Activated CD4-positive, alpha-beta T cell treated with anti-CD3 and anti-CD28 coated beads for 36 hours (primary cell): ENCODE measurements at regions of chr3 and their contacts with region 1.

Region 1: DNA sequence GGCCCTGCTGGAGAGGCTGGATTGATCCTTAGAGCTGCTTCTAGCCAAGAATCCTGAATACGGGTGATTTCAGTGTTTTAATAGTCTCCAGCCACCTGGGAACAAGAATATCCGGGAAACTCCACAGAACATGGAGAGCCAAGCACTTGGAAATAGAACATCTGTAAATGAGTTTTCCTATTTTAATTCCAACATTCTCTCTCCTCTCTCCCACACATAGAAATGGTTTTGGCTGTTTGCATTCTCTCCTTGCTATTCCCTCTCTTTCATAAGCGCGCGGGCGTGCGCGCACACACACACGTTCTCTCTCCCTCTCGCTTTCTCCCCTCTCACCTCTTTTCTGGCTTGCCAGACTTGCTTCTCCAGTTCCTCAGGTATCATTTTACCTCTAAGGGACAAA is 50.6 kb downstream of the GADL1 start:
- DNase-seq: no peak
- ATAC-seq: no peak
- H3K4me3 Mint-ChIP-seq: no peak overlapping the region
- H3K27ac Mint-ChIP-seq: no peak overlapping the region
- H3K4me1 Mint-ChIP-seq: peaks cover 10% of the 10 kb centered on the region
- H3K27me3 Mint-ChIP-seq: peaks cover 2% of the 10 kb centered on the region

Region 2: GRCh38 chr3:30511524-30512278 is 332.2 kb before region 1 on chr3:
- CTCF ChIA-PET with region 1: no interaction called
- POLR2A ChIA-PET with region 1: no interaction called
- intact Hi-C with region 1: no loop called
- DNase-seq: peak; percentile 33
- ATAC-seq: peak; percentile 49
- H3K4me3 Mint-ChIP-seq: no peak overlapping the region
- H3K27ac Mint-ChIP-seq: no peak overlapping the region
- H3K4me1 Mint-ChIP-seq: peaks cover 11% of the 10 kb centered on the region
- H3K27me3 Mint-ChIP-seq: no peaks in the 10 kb centered on the region

Region 3: DNA sequence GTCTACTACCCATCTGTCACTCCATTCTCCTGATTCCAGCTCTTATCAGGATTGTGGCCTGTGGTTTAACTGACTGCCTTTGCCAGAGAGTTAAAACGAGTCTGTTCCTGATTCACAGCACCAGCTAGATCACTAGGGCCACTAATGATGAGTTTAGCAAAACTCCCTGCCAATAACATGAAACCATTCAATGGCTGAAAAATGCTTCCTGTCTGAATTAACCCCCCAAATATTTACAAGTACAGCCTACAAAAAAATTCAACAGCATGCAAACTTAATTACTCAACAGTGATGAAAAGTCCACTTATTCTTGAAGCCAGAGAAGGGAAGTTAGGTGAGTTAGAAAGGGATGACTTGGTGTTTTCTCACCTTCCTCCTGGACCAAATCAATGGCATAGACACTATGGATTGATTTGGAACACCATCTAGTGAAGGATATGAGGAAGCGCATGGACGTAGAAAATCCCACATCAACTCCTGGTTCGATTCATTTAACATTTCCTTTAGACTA is 96.1 kb before region 1 on chr3:
- CTCF ChIA-PET with region 1: no interaction called
- POLR2A ChIA-PET with region 1: no interaction called
- intact Hi-C with region 1: no loop called
- DNase-seq: no peak
- ATAC-seq: no peak
- H3K4me3 Mint-ChIP-seq: no peak overlapping the region
- H3K27ac Mint-ChIP-seq: no peak overlapping the region
- H3K4me1 Mint-ChIP-seq: peaks cover 60% of the 10 kb centered on the region
- H3K27me3 Mint-ChIP-seq: no peaks in the 10 kb centered on the region

Region 4: DNA sequence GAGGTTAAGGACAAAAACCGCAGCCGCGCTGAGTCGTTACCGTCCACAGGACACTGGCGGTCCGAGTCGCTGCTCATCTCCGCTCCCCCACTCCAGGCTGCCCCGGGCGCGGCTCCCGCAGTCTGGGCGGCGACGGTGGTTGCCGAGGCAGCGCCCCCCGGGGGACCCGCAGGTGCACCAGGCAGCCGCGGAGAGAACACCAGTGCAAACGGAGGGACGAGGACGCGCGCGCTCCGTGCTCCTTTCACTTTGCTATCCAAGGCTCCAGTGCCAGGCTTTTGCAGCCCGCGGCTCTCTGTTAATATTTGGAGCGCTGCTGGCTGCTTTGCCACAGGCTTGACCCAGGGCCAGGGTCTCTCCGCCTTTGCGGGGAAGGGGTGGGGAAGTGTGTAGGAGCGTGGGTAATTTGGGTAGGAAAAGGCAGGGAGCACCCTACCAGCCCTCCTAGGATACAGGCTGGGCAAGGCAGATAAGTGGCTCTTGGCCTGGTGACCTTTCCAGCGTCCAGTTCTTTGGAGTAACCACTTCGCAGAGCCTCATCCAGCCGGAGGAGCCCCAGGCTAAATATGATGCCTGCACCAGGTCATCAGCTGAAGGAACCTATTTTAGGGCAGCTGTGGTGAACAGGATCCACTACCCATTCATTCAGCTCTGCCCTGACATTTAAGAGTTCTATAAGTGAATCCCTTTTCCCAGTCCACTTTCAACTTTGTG is 50.8 kb after region 1 on chr3 and contains the start of gene GADL1:
- CTCF ChIA-PET with region 1: no interaction called
- POLR2A ChIA-PET with region 1: no interaction called
- intact Hi-C with region 1: loop called in 1 of 2 experiments (anchors 5 kb)
- DNase-seq: peak; percentile 48
- ATAC-seq: peak; percentile 53
- H3K4me3 Mint-ChIP-seq: peak within 1 kb of the TSS; percentile 57
- H3K27ac Mint-ChIP-seq: peak within 1 kb of the TSS; percentile 13
- H3K4me1 Mint-ChIP-seq: peaks cover 17% of the 10 kb centered on the region
- H3K27me3 Mint-ChIP-seq: peaks cover 22% of the 10 kb centered on the region
- total RNA-seq, gene GADL1: not detected